Activated CD4-positive, alpha-beta memory T cell treated with anti-CD3 and anti-CD28 coated beads for 36 hours (primary cell): ENCODE measurements at regions of chr17 and their contacts with region 1.

Region 1: GRCh38 chr17:58006924-58007780 is at the start of gene SRSF1:
- DNase-seq: peak; percentile 99
- H3K4me3 Mint-ChIP-seq: peak within 1 kb of the TSS; percentile 99
- H3K27ac Mint-ChIP-seq: peak within 1 kb of the TSS; percentile 100
- H3K4me1 Mint-ChIP-seq: peaks cover 46% of the 10 kb centered on the region
- H3K27me3 Mint-ChIP-seq: no peaks in the 10 kb centered on the region
- total RNA-seq, gene SRSF1: 325 to 326 TPM

Region 2: GRCh38 chr17:57987580-57988421 is 19.4 kb before region 1 on chr17 and contains the start of gene VEZF1:
- CTCF ChIA-PET with region 1: interaction called, 4 read pairs
- POLR2A ChIA-PET with region 1: interaction called, 26 read pairs
- intact Hi-C with region 1: loop called (anchors 1 kb)
- DNase-seq: peak; percentile 82
- H3K4me3 Mint-ChIP-seq: peak within 1 kb of the TSS; percentile 89
- H3K27ac Mint-ChIP-seq: peak within 1 kb of the TSS; percentile 87
- H3K4me1 Mint-ChIP-seq: peaks cover 56% of the 10 kb centered on the region
- H3K27me3 Mint-ChIP-seq: no peaks in the 10 kb centered on the region
- total RNA-seq, gene VEZF1: 26.8 to 29.8 TPM

Region 3: DNA sequence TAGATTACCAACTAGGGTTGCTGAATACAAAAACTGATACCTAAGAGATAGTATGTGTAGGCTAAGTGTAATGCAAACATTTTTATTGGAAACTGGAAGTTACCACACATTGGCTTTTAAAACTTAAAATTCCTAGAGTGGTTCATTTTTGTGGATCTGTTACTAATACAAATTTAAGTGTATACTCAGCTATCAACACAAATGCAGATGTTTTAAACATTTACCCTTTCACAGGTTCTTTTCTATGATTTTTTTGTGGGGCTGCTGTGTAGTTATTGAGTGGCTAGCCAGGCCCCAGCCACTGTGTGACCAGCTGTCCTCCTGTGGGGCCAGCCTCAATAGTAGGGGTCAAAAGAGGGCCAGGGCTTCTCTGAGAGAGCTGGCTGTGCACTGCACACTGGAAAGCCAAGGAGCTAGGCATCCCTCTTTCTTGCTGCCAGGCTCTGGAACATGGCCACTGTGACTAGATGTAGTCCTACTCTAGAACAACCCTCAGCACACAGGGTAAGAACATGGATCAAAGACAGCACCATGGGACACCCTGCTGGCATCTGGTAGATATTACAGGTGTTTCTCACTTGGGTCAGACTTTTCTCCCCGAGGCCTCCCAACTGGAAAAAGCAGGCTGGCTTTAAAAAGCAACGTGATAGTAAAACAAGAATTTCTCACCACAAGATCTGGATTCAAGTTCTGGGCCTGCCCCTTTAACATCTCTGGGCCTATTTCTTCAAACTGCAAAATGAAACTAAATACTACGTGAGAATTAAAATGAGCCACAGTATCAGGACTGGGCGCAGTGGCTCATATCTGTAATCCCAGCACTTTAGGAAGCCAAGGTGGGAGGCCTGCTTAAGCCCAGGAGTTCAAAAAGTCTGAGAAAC is 11.8 kb before region 1 on chr17:
- CTCF ChIA-PET with region 1: interaction called, 27 read pairs
- POLR2A ChIA-PET with region 1: interaction called, 32 read pairs
- intact Hi-C with region 1: loop called (anchors 1 kb)
- DNase-seq: peak; percentile 76
- H3K4me3 Mint-ChIP-seq: no peak overlapping the region
- H3K27ac Mint-ChIP-seq: peak overlapping the region; percentile 47
- H3K4me1 Mint-ChIP-seq: peaks cover 69% of the 10 kb centered on the region
- H3K27me3 Mint-ChIP-seq: no peaks in the 10 kb centered on the region

Region 4: GRCh38 chr17:58082870-58083490 is 75.8 kb after region 1 on chr17 and contains the start of gene DYNLL2:
- CTCF ChIA-PET with region 1: interaction called, 4 read pairs
- POLR2A ChIA-PET with region 1: interaction called, 21 read pairs
- intact Hi-C with region 1: loop called (anchors 1 kb)
- DNase-seq: peak; percentile 94
- H3K4me3 Mint-ChIP-seq: peak within 1 kb of the TSS; percentile 84
- H3K27ac Mint-ChIP-seq: peak within 1 kb of the TSS; percentile 81
- H3K4me1 Mint-ChIP-seq: peaks cover 33% of the 10 kb centered on the region
- H3K27me3 Mint-ChIP-seq: no peaks in the 10 kb centered on the region
- total RNA-seq, gene DYNLL2: 24.8 to 26.8 TPM

Region 5: DNA sequence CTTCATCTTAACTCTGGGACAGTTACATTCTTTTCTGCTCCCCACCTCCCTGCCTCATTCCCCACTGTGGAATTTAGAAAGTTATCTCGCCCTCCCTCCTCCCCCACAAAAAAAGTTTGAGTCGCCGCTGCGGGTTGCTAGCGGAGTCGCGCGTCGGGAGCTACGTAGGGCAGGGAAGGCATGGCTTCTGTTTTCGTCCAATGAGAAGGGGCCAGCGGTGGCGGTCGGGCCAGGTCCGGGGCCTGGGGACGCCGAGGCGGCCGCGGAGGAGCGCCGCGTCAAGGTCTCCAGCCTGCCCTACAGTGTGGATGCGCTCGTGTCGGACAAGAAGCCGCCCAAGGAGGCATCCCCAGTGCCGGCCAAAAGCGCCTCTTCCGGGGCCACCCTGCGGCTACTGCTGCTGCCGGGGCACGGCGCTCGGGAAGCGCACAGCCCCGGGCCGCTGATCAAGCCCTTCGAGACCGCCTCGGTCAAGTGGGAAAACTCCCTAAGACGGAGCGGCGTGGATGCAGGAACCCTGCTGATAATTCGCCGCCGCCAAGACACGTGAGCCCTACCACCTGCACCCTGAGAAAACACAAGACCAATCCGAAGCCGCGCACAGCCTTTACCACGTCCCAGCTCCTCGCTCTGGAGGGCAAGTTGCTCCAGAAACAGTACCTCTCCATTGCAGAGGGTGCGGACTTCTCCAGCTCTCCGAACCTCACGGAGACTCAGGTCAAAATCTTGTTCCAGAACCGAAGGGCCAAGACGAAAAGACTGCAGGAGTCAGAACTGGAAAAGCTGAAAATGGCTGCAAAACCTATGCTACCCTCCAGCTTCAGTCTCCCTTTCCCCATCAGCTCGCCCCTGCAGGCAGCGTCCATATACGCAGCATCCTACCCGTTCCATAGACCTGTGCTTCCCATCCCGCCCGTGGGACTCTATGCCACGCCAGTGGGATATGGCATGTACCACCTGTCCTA is 150.0 kb after region 1 on chr17:
- CTCF ChIA-PET with region 1: no interaction called
- POLR2A ChIA-PET with region 1: no interaction called
- intact Hi-C with region 1: loop called (anchors 5 kb)
- DNase-seq: peak; percentile 78
- H3K4me3 Mint-ChIP-seq: peak overlapping the region; percentile 88
- H3K27ac Mint-ChIP-seq: peak overlapping the region; percentile 84
- H3K4me1 Mint-ChIP-seq: peaks cover 47% of the 10 kb centered on the region
- H3K27me3 Mint-ChIP-seq: no peaks in the 10 kb centered on the region

Region 6: GRCh38 chr17:58344047-58344790 is 337.1 kb after region 1 on chr17:
- CTCF ChIA-PET with region 1: no interaction called
- POLR2A ChIA-PET with region 1: interaction called, 5 read pairs
- intact Hi-C with region 1: loop called (anchors 2 kb)
- DNase-seq: peak; percentile 97
- H3K4me3 Mint-ChIP-seq: peak overlapping the region; percentile 92
- H3K27ac Mint-ChIP-seq: peak overlapping the region; percentile 98
- H3K4me1 Mint-ChIP-seq: peaks cover 56% of the 10 kb centered on the region
- H3K27me3 Mint-ChIP-seq: no peaks in the 10 kb centered on the region

Region 7: GRCh38 chr17:59155439-59156182 is 1148.5 kb after region 1 on chr17 and contains the start of gene PRR11:
- CTCF ChIA-PET with region 1: no interaction called
- POLR2A ChIA-PET with region 1: no interaction called
- intact Hi-C with region 1: loop called (anchors 2 kb)
- DNase-seq: peak; percentile 97
- H3K4me3 Mint-ChIP-seq: no peak within 1 kb of the TSS
- H3K27ac Mint-ChIP-seq: no peak within 1 kb of the TSS
- H3K4me1 Mint-ChIP-seq: peaks cover 37% of the 10 kb centered on the region
- H3K27me3 Mint-ChIP-seq: no peaks in the 10 kb centered on the region
- total RNA-seq, gene PRR11: 67.3 to 70.2 TPM